Aorta (tissue), 5 donors: ENCODE measurements at regions of chr3 and their contacts with region 1.

Region 1: GRCh38 chr3:58532794-58533220 is 4.2 kb downstream of the ACOX2 start:
- DNase-seq: peak; percentile 78 to 87
- ATAC-seq: peak; percentile 75
- H3K4me3 ChIP-seq: no peak overlapping the region
- H3K27ac ChIP-seq: no peak overlapping the region
- H3K4me1 ChIP-seq: no peaks in the 10 kb centered on the region
- H3K27me3 ChIP-seq: no peaks in the 10 kb centered on the region

Region 2: DNA sequence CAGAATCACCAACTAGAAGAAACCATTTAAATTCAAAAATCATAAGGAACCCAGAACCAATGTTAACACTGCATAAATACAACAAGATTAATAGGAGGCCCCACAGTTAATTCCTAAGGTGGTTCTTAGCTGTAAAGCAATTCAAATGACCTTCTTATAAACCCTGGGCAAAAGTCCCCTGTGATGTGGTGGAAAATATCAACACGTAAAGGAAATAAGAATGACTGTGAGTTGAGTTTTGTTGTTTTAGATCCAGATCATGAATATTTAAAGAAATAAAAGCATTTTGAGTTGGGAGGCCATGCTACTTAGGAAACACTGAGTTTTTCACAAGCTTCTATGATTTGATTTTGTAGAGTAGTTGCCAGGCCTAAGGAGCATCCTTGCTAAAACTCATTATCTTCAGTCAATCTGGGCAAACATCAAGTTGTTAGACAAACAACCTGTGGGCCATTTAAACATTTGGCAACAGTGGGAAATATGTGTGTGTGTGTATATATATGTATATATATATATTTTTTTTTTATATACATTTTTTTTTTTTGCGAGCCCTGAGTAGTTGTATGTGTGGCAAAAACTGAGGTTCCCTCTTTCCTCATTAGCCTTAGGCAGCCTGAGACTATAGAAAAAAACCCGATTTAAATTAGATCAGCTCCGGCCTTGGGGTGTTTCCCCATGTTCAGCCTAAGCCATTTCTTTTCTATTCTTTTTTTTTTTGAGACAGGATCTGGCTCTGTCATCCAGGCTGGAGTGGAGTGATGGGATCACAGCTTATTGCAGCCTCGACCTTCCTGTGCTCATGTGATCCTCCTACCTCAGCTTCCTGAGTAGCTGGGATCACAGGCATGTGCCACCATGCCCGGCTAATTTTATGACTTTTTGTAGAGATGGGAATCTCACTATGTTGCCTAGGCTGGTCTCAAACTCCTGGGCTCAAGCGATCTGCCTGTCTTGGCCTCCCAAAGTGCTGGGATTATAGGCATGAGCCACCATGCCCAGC is 208.1 kb before region 1 on chr3:
- intact Hi-C with region 1: loop called in 1 of 2 experiments (anchors 5 kb)
- DNase-seq: no peak
- ATAC-seq: no peak
- H3K4me3 ChIP-seq: no peak overlapping the region
- H3K27ac ChIP-seq: no peak overlapping the region
- H3K4me1 ChIP-seq: no peaks in the 10 kb centered on the region
- H3K27me3 ChIP-seq: no peaks in the 10 kb centered on the region

Region 3: GRCh38 chr3:58433400-58434169 is 99.2 kb before region 1 on chr3 and contains the start of gene PDHB:
- intact Hi-C with region 1: loop called in 1 of 2 experiments (anchors 10 kb)
- DNase-seq: peak; percentile 96 to 99
- ATAC-seq: peak; percentile 97
- H3K4me3 ChIP-seq: peak within 1 kb of the TSS; percentile 32 to 55
- H3K27ac ChIP-seq: peak within 1 kb of the TSS in 1 of 2 donors; percentile 60
- H3K4me1 ChIP-seq: no peaks in the 10 kb centered on the region
- H3K27me3 ChIP-seq: no peaks in the 10 kb centered on the region
- total RNA-seq, gene PDHB: 49.0 to 49.9 TPM

Region 4: DNA sequence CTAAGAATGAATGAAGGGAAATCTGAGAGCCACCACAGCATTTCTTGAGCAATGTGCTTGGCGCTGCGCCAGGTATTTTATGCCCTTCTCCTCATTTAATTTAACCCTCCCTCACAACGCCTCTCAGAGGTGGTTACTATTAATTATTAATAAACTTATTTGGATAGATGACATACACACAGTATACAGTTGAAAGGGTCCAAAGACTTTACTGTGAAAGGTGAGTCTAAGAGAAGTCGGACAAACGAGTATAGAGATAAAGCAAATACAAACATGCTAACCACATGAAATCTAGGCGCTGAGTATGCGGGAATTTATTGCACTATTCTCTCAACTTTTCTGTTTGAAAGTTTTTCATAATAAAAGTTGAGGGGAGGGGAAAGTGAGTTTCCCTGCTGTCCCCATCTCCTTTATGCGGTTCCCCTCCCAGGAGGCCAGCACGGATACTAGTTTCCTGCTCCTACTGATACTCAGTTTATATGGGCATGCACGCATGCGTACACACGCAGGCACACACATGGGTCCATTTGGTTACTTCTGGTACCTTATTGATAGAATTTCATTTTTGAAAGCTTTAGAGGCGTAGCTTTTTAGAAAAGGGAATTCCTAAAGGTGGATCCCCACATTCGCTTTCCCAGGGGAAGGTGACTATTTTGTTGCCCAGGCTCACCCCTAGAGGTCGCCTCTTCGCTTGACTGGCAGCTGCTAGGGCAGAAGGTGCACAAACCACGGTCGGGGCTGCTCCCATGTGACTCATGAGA is 69.4 kb before region 1 on chr3:
- intact Hi-C with region 1: loop called in 1 of 2 experiments (anchors 5 kb)
- DNase-seq: peak; percentile 81 to 87
- ATAC-seq: peak; percentile 86
- H3K4me3 ChIP-seq: peak overlapping the region in 1 of 2 donors; percentile 3
- H3K27ac ChIP-seq: no peak overlapping the region
- H3K4me1 ChIP-seq: no peaks in the 10 kb centered on the region
- H3K27me3 ChIP-seq: no peaks in the 10 kb centered on the region

Region 5: DNA sequence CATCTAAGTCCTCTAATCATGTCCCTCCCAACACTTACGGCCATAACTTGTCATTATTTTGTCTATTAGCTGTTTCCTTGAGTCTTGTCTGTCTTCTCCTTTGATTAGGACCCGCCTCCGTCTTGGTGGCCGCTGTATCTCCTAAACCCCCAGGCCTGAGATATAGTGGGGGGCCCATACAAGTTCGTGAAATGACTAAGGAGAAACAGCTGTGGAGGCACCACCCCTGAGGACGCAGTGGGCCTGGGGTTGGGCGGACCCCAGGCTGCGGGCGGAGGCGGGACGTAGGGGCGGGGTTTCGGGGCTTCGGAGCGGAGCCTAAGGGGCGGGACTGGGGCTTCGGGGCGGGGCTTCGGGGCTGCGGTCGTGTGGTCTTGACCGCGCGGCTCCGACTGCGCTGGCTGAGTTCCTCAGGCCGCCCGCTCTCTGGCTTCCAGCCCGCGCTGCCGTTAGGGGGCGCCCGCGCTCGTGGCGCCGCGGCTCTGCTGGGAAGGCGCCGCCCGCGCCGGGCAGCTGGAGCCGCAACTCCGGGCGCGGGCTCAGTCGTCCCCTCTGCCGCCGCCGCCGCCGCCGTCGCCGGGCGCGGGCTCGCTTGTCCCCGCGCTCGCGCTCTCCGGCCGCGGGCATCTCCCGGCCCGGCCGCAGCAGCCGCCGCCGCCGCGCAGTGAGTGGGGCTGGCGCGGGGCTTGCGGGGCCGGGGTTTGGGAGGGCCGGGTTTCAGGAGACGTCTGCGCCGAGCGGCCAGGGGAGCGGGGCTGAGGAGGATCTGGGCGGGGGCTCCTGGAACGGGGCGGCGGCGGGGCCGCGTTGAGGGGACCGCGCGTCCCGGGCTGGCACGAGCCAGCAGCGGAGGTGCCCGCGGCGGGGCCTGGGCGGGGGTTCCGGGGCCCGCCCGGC is 41.1 kb before region 1 on chr3 and contains the start of gene KCTD6:
- intact Hi-C with region 1: no loop called
- DNase-seq: peak; percentile 96 to 98
- ATAC-seq: peak; percentile 98
- H3K4me3 ChIP-seq: peak within 1 kb of the TSS; percentile 77 to 98
- H3K27ac ChIP-seq: peak within 1 kb of the TSS; percentile 30 to 43
- H3K4me1 ChIP-seq: peaks cover 0 to 6% of the 10 kb centered on the region in 2 donors
- H3K27me3 ChIP-seq: no peaks in the 10 kb centered on the region
- total RNA-seq, gene KCTD6: 7.9 to 12.8 TPM